PC-3 (cell line): ENCODE measurements at regions of chr1 and their contacts with region 1.

Region 1: DNA sequence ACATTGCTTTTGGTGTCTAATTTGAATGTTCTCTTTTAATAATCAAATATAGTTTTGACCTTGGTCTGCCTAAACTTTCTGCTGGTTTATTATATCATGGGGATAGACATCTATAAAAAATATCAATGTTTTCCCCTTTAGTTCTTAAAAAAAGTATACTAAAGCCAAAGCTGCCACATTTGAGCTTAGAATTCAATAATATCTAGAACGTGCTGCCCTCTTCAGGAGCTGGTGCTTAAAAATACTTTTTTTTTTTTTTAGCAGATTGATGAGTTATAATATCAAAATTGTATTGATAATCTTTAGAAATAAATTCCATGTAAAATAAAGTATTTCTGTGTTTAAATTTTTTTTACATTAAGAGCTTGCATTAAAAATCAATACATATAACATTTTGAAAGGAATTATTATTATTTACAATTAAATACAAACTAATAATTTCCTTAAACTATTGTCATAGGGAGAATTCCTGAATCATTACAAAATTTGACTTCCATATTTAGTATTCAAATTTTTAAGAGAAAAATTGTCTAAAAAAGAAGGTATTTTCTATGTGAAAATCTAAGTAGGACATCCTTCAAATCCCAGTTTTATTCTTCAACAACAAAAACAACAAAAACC is 40.1 kb upstream of the ADGRL2 start:
- DNase-seq: peak; percentile 46
- ATAC-seq: no peak
- H3K4me3 ChIP-seq: no peak overlapping the region
- H3K27ac ChIP-seq: no peak overlapping the region
- H3K4me1 ChIP-seq: no peaks in the 10 kb centered on the region
- H3K27me3 ChIP-seq: no peaks in the 10 kb centered on the region
- CTCF ChIP-seq: peak; percentile 64

Region 2: GRCh38 chr1:81542196-81542595 is 218.4 kb before region 1 on chr1:
- CTCF ChIA-PET with region 1: no interaction called
- POLR2A ChIA-PET with region 1: interaction called, 24 read pairs
- intact Hi-C with region 1: no loop called
- DNase-seq: no peak
- ATAC-seq: no peak
- H3K4me3 ChIP-seq: no peak overlapping the region
- H3K27ac ChIP-seq: no peak overlapping the region
- H3K4me1 ChIP-seq: no peaks in the 10 kb centered on the region
- H3K27me3 ChIP-seq: peaks cover 45% of the 10 kb centered on the region
- CTCF ChIP-seq: no peak

Region 3: GRCh38 chr1:81549604-81550127 is 210.9 kb before region 1 on chr1:
- CTCF ChIA-PET with region 1: interaction called, 22 read pairs
- POLR2A ChIA-PET with region 1: no interaction called
- intact Hi-C with region 1: loop called (anchors 1 kb)
- DNase-seq: peak; percentile 74
- ATAC-seq: peak; percentile 88
- H3K4me3 ChIP-seq: no peak overlapping the region
- H3K27ac ChIP-seq: no peak overlapping the region
- H3K4me1 ChIP-seq: peaks cover 12% of the 10 kb centered on the region
- H3K27me3 ChIP-seq: peaks cover 33% of the 10 kb centered on the region
- CTCF ChIP-seq: peak; percentile 84

Region 4: DNA sequence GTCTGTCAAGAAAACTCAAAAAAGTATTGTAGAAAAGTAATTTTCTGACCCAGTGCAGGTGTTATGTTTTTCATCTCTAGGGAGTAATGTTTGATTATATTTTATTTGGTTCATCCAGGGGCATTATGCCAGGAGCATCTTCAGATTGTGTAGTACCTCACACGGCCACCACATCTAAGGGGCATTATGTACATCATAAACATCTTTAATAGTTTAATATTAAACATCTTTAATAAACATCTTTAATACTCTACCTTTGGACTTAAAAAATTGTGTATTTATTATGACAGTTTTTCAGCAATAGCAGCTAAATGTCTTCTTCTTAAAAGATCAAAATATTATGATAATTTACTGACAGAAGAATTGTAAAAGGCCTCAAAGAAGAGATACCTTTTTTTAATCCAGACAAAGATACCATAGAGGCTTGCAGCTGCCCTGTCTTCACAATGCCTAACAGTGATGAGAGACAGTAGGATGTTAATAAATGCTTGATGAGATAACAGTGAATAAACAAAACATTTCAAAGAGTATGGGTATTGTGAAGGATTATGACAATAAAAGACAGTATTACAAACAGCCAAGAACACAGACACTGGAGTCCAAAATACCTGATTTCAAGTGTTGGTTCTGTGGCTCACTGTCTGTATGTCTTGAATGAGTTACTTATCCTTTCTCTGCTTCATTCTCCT is 200.8 kb before region 1 on chr1:
- CTCF ChIA-PET with region 1: no interaction called
- POLR2A ChIA-PET with region 1: no interaction called
- intact Hi-C with region 1: no loop called
- DNase-seq: peak; percentile 49
- ATAC-seq: peak; percentile 55
- H3K4me3 ChIP-seq: no peak overlapping the region
- H3K27ac ChIP-seq: no peak overlapping the region
- H3K4me1 ChIP-seq: peaks cover 7% of the 10 kb centered on the region; the same call in 1 of the 2 replicates
- H3K27me3 ChIP-seq: no peaks in the 10 kb centered on the region
- CTCF ChIP-seq: peak; percentile 43